ENCODE measurements at regions of chr1 and their contacts with region 1.

Region 1: GRCh38 chr1:172398970-172399755 is 21.3 kb upstream of the C1orf105 start:
- DNase-seq: peak; percentile 31 to 81 (median 60)
- H3K4me3 ChIP-seq: no peak overlapping the region
- H3K27ac ChIP-seq: peak overlapping the region in 4 of 5 donors; percentile 29 to 69 (median 48)
- H3K4me1 ChIP-seq: peaks cover 18 to 38% of the 10 kb centered on the region in 2 donors
- H3K27me3 ChIP-seq: no peaks in the 10 kb centered on the region
- CTCF ChIP-seq: peak; percentile 56 to 79 (median 72)
- POLR2A ChIP-seq: no peak

Region 2: DNA sequence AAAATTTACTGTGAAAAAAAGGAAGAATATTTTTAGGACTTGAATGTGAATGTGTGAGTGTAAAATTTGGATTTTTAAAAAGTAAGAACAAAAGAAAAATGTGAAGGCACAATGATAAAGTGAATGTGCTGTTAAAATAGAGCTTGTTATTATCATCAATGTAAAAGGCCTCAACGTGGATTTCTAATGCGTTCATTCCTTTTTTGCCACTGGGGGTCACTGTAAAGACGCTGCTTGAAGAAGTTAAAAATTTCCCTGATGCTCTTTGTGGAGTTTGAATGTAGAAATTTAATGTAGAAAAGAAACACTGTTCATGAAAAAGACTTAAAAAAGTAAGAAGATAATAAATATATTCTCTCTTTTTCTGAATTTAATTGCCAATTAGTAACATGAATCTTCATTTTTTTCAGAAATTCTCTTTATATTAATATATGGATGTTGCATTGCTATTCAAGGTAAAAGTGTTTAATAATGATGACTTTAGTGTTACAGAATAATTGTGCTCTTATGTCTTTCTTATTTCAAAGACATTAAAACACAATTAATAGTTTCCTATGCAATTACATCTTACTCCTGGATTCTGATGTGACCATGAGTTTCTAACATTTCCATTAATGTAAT is 396.3 kb before region 1 on chr1:
- intact Hi-C with region 1: loop called (anchors 10 kb)
- DNase-seq: peak in 3 of 7 donors; percentile 17 to 43 (median 34)
- H3K4me3 ChIP-seq: no peak overlapping the region
- H3K27ac ChIP-seq: no peak overlapping the region
- H3K4me1 ChIP-seq: peaks cover 0 to 6% of the 10 kb centered on the region in 2 donors
- H3K27me3 ChIP-seq: no peaks in the 10 kb centered on the region
- CTCF ChIP-seq: peak; percentile 48 to 76 (median 64)
- POLR2A ChIP-seq: no peak

Region 3: DNA sequence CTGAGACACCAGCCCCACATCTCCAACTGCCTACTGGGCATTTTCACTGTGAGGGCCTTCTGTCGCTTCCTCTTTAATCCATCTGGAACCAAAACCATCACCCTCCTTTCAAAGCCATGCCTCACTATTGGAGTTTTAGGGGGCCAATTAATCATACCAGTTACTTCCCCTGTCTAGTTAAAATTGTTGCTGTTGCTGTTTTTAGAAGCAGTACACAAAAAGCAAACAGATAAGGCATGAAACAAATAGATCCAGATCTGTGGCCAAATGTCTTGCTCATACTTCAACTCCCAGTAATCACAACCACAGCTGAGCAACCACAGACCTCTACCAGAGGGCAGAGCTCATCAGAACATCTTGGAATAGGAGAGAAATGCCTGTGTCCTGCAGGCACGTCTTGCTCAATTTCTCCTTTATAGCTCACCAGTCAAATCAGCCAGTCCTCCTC is 112.5 kb before region 1 on chr1:
- intact Hi-C with region 1: loop called in 1 of 2 experiments (anchors 10 kb)
- DNase-seq: peak; percentile 42 to 90 (median 75)
- H3K4me3 ChIP-seq: no peak overlapping the region
- H3K27ac ChIP-seq: peak overlapping the region; percentile 19 to 77 (median 55)
- H3K4me1 ChIP-seq: peaks cover 7 to 29% of the 10 kb centered on the region in 2 donors
- H3K27me3 ChIP-seq: no peaks in the 10 kb centered on the region
- CTCF ChIP-seq: peak in 1 of 6 experiments; percentile 16
- POLR2A ChIP-seq: peak in 1 of 2 donors; percentile 32

Measured in adrenal gland (tissue), 19 donors.